ENCODE measurements at regions of chr1 and their contacts with region 1.

Region 1: DNA sequence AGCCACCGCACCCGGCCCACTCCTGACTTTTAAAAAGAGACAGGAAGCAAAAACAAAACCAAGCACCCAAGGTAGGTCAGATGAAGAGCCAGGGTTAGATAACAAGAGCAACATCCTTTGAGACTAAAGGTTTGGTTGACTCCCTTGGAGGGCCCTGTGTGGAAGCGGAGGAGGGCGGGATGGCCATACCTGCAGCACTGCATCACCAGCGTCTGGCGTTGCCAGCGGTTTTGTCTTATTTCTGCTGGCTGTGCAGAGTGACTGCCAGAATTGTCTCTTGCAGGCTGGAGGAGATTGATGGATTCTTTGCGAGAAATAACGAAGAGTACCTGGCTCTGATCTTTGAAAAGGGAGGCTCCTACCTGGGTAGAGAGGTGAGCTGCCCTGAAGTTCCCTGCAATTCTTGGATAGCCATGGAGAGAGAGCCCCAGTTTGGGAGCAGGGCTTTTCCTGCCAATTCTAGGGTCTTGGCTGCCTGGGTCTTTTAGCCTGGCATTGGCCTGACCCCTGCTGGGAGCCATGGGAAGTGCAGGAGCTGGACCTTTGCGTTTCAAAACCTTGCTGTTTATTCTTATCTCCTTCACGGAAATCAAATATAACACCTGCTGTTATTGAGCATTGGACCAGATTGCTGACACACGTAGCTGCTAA is 24.0 kb downstream of the QSOX1 start:
- DNase-seq: peak; percentile 60 to 75
- ATAC-seq: peak; percentile 52 to 70 (median 66)
- H3K4me3 ChIP-seq: no peak overlapping the region
- H3K27ac ChIP-seq: no peak overlapping the region
- H3K4me1 ChIP-seq: peaks cover 10% of the 10 kb centered on the region
- H3K27me3 ChIP-seq: no peaks in the 10 kb centered on the region
- CTCF ChIP-seq: peak; percentile 98

Region 2: GRCh38 chr1:179706339-179706941 is 472.2 kb before region 1 on chr1:
- intact Hi-C with region 1: loop called in 1 of 2 experiments (anchors 10 kb)
- DNase-seq: peak in 1 of 2 donors; percentile 46
- ATAC-seq: no peak
- H3K4me3 ChIP-seq: no peak overlapping the region
- H3K27ac ChIP-seq: no peak overlapping the region
- H3K4me1 ChIP-seq: no peaks in the 10 kb centered on the region
- H3K27me3 ChIP-seq: no peaks in the 10 kb centered on the region
- CTCF ChIP-seq: peak; percentile 69

Region 3: DNA sequence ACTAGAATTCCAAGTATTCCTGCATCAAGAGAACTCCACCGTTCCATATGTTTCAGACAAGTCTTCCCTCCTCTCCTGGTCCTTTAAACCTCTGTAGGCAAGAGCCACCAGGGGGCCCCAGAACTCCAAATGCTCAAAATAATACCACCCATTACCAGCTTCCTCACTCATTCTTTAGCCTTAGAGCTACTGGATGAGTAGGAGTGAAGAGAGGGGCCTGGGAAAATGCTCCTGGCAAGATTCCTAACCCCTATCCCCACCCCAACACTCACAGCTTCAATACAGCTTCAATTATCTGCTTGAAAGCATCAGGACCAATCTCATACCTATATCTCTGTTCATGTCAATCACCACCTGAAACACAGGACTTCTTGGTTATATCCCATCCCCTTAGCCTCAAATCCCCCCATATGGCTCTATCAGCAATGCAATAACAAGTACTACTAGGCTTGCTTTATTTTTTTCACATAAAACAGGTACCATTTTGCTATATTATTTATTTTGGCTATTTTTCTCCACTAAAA is 310.8 kb before region 1 on chr1:
- intact Hi-C with region 1: loop called in 1 of 2 experiments (anchors 10 kb)
- DNase-seq: peak in 1 of 2 donors; percentile 26
- ATAC-seq: peak in 3 of 4 donors; percentile 25 to 70 (median 53)
- H3K4me3 ChIP-seq: no peak overlapping the region
- H3K27ac ChIP-seq: no peak overlapping the region
- H3K4me1 ChIP-seq: peaks cover 35% of the 10 kb centered on the region
- H3K27me3 ChIP-seq: no peaks in the 10 kb centered on the region
- CTCF ChIP-seq: peak; percentile 56

Region 4: GRCh38 chr1:179882243-179883039 is 296.2 kb before region 1 on chr1 and contains the start of gene TOR1AIP1:
- intact Hi-C with region 1: loop called in 1 of 2 experiments (anchors 10 kb)
- DNase-seq: peak; percentile 98 to 99
- ATAC-seq: peak; percentile 92 to 94 (median 92)
- H3K4me3 ChIP-seq: peak within 1 kb of the TSS; percentile 91
- H3K27ac ChIP-seq: peak within 1 kb of the TSS; percentile 99
- H3K4me1 ChIP-seq: peaks cover 48% of the 10 kb centered on the region
- H3K27me3 ChIP-seq: no peaks in the 10 kb centered on the region
- CTCF ChIP-seq: peak; percentile 49
- total RNA-seq, gene TOR1AIP1: 35.1 to 59.6 (median 53.3) TPM

Region 5: DNA sequence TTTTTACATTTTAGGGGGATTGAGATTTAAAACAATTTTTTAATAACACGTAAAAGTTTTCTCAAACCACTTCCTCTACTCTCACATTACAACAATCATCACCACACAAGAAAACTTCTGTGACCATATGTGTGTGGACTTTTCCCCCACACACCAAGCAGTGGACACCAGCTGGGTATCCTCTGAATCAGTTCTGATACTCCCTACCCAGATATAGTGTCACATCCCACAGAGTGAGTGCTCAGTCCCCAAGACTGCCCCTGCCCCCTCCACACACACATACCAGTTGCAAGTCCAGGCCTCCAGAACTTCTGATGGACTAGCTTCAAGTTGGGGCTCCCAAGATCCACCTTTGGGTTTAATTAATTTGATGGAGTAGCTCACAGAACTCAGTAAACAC is 77.2 kb before region 1 on chr1:
- intact Hi-C with region 1: loop called in 1 of 2 experiments (anchors 5 kb)
- DNase-seq: no peak
- ATAC-seq: no peak
- H3K4me3 ChIP-seq: no peak overlapping the region
- H3K27ac ChIP-seq: no peak overlapping the region
- H3K4me1 ChIP-seq: no peaks in the 10 kb centered on the region
- H3K27me3 ChIP-seq: no peaks in the 10 kb centered on the region
- CTCF ChIP-seq: no peak

Region 6: GRCh38 chr1:180123463-180123936 is 55.1 kb before region 1 on chr1:
- intact Hi-C with region 1: loop called in 1 of 2 experiments (anchors 5 kb)
- DNase-seq: no peak
- ATAC-seq: no peak
- H3K4me3 ChIP-seq: no peak overlapping the region
- H3K27ac ChIP-seq: no peak overlapping the region
- H3K4me1 ChIP-seq: no peaks in the 10 kb centered on the region
- H3K27me3 ChIP-seq: no peaks in the 10 kb centered on the region
- CTCF ChIP-seq: no peak

Region 7: GRCh38 chr1:180309338-180309737 is 130.7 kb after region 1 on chr1:
- intact Hi-C with region 1: no loop called
- DNase-seq: no peak
- ATAC-seq: no peak
- H3K4me3 ChIP-seq: no peak overlapping the region
- H3K27ac ChIP-seq: no peak overlapping the region
- H3K4me1 ChIP-seq: no peaks in the 10 kb centered on the region
- H3K27me3 ChIP-seq: no peaks in the 10 kb centered on the region
- CTCF ChIP-seq: no peak

Measured in psoas muscle (tissue), 8 donors.